Thyroid gland (tissue), 4 donors: ENCODE measurements at regions of chr6 and their contacts with region 1.

Region 1: GRCh38 chr6:31546962-31547726 is at the start of gene NFKBIL1:
- DNase-seq: peak; percentile 96
- H3K4me3 ChIP-seq: peak within 1 kb of the TSS in 2 of 3 donors; percentile 7 to 25
- H3K27ac ChIP-seq: peak within 1 kb of the TSS; percentile 66 to 85 (median 66)
- H3K4me1 ChIP-seq: peaks cover 17 to 18% of the 10 kb centered on the region in 2 donors
- H3K27me3 ChIP-seq: no peaks in the 10 kb centered on the region
- CTCF ChIP-seq: no peak
- POLR2A ChIP-seq: peak in 1 of 2 donors; percentile 68
- total RNA-seq, gene NFKBIL1: 23.7 to 34.0 (median 27.5) TPM

Region 2: DNA sequence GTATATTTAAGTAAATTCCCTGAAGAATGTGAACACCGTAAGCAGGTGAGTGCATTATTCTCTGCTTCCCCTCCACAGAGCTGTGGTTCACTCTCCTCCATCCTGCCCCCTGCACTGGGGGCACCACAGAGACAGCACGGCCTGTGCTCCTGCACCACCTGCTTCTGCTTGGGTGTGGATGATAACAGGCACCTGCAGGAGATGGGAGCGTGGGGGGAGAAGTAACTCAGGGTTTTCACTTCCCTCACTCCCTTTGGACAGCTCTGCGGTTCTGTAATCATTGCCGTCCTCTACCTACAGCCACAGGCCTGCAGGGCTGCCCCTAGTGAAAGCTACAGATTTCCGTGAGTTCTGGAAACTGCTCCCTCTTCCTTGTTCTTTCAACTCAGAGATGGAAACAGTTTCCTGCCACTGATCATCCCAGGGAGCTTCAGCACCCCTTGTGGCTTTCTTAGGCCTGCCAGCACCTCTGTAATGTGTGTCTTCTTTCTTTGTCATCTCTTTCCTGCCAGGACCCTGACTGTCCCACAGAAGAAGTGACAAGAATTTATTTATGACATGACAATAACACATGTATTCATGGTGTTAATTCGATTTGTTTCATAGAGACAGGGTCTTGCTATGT is 70.5 kb before region 1 on chr6:
- intact Hi-C with region 1: no loop called
- DNase-seq: no peak
- H3K4me3 ChIP-seq: no peak overlapping the region
- H3K27ac ChIP-seq: no peak overlapping the region
- H3K4me1 ChIP-seq: no peaks in the 10 kb centered on the region
- H3K27me3 ChIP-seq: no peaks in the 10 kb centered on the region
- CTCF ChIP-seq: no peak
- POLR2A ChIP-seq: no peak

Region 3: DNA sequence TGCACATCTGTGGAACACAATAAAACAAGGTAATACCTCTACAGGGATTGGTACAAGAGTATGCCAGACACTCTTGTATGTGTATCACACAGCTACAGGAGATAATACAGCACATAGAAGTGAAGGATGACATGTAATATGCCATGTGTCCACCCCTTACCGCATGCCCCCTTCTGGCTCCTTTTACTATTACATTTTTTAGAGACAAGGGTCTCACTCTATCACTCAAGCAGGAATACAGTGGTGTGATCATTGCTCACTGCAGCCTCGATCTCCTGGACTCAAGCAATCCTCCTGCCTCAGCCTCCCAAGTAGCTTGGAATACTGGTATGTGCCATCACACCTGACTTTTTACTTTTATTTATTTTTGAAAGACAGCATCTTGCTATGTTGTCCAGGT is 49.9 kb after region 1 on chr6:
- intact Hi-C with region 1: loop called (anchors 5 kb)
- DNase-seq: no peak
- H3K4me3 ChIP-seq: no peak overlapping the region
- H3K27ac ChIP-seq: no peak overlapping the region
- H3K4me1 ChIP-seq: no peaks in the 10 kb centered on the region
- H3K27me3 ChIP-seq: no peaks in the 10 kb centered on the region
- CTCF ChIP-seq: peak in 2 of 6 experiments; percentile 25 to 26
- POLR2A ChIP-seq: no peak